ENCODE measurements at regions of chr1 and their contacts with region 1.

Region 1: DNA sequence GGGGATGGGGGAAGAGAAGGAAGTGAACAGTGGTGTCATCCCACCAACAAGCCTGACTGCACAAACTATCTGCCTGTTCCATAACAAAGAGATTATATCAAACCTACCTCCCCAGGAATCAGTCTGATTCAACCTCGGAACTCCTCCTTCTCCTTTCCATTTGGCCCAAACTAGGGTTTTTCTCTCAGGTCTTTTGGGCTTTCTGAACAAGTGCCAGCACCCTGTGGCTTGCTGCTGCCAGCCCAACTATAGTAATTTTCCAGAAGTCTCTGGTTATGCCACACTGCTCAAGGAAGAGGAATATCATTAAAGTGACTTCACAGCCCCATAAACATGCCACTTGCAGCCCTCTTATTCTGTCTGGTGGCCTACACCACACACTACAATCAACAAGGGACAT is 70.5 kb downstream of the RGS7 start:
- DNase-seq: no peak

Region 2: GRCh38 chr1:241012708-241013340 is 273.7 kb before region 1 on chr1:
- intact Hi-C with region 1: loop called in 1 of 2 experiments (anchors 2 kb)
- DNase-seq: no peak

Measured in posterior vena cava (tissue), 2 donors.